WTC11 (cell line): ENCODE measurements at regions of chr4 and their contacts with region 1.

Region 1: GRCh38 chr4:78056265-78057129 is 626 bp upstream of the FRAS1 start:
- DNase-seq: peak; percentile 80
- ATAC-seq: peak; percentile 59
- H3K4me3 Mint-ChIP-seq: peak overlapping the region; percentile 93
- H3K27ac Mint-ChIP-seq: peak overlapping the region; percentile 100
- H3K4me1 Mint-ChIP-seq: peaks cover 32% of the 10 kb centered on the region
- H3K27me3 Mint-ChIP-seq: no peaks in the 10 kb centered on the region; the same call in 1 of the 2 replicates
- CTCF ChIP-seq: no peak

Region 2: GRCh38 chr4:78069859-78070258 is 13.4 kb after region 1 on chr4:
- CTCF ChIA-PET with region 1: interaction called, 21 read pairs
- POLR2A ChIA-PET with region 1: interaction called, 6 read pairs
- DNase-seq: no peak
- ATAC-seq: no peak
- H3K4me3 Mint-ChIP-seq: no peak overlapping the region
- H3K27ac Mint-ChIP-seq: no peak overlapping the region
- H3K4me1 Mint-ChIP-seq: peaks cover 54% of the 10 kb centered on the region
- H3K27me3 Mint-ChIP-seq: no peaks in the 10 kb centered on the region
- CTCF ChIP-seq: no peak

Region 3: DNA sequence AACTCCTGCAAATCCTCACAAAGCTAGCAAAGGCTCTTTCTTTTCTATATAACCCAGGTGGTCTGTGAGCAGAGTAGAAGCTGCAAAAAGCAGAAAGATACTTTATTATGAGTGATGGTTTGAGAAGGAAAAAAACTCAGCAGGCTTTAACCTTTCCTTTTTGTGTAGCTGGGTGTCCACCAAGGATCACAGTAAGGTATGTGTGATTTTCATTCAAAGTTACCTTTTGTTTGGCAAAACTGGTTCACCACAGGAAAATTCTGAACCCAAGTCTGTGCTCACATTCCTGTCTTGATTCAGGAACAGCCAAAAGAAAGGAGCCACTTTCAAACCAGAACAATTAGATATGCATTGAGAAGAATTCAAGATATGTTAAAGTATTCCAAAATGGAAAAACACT is 36.4 kb after region 1 on chr4:
- CTCF ChIA-PET with region 1: interaction called, 35 read pairs
- POLR2A ChIA-PET with region 1: interaction called, 6 read pairs
- DNase-seq: no peak
- ATAC-seq: peak; percentile 90
- H3K4me3 Mint-ChIP-seq: peak overlapping the region; percentile 53
- H3K27ac Mint-ChIP-seq: peak overlapping the region; percentile 100
- H3K4me1 Mint-ChIP-seq: peaks cover 44% of the 10 kb centered on the region
- H3K27me3 Mint-ChIP-seq: no peaks in the 10 kb centered on the region
- CTCF ChIP-seq: no peak

Region 4: GRCh38 chr4:78171482-78171881 is 115.0 kb after region 1 on chr4:
- CTCF ChIA-PET with region 1: interaction called, 60 read pairs
- POLR2A ChIA-PET with region 1: interaction called, 12 read pairs
- DNase-seq: peak; percentile 49
- ATAC-seq: peak; percentile 74
- H3K4me3 Mint-ChIP-seq: no peak overlapping the region
- H3K27ac Mint-ChIP-seq: peak overlapping the region; percentile 17; the same call in 1 of the 2 replicates
- H3K4me1 Mint-ChIP-seq: peaks cover 79% of the 10 kb centered on the region
- H3K27me3 Mint-ChIP-seq: no peaks in the 10 kb centered on the region
- CTCF ChIP-seq: no peak

Region 5: DNA sequence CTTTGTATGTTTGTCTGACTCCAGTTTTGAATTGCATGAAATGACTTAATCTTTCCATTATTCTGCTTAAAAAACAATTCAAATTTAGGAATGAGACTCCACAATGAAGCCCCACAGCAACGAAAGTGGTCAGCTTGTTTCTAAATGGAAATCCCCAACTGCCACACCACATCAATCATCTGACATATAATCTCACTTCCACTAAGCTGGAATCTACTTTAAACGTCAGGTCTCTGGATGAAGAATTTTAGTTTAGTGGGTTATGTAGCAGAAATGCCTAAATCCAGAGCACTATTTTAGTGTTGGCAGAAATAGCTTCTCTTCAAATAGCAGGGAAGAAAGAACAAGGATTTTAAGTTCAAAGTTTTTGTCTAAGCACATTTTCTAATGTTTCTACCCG is 717.9 kb after region 1 on chr4:
- CTCF ChIA-PET with region 1: no interaction called
- POLR2A ChIA-PET with region 1: interaction called, 10 read pairs
- DNase-seq: no peak
- ATAC-seq: no peak
- H3K4me3 Mint-ChIP-seq: no peak overlapping the region
- H3K27ac Mint-ChIP-seq: no peak overlapping the region; the same call in 1 of the 2 replicates
- H3K4me1 Mint-ChIP-seq: peaks cover 10% of the 10 kb centered on the region; the same call in 1 of the 2 replicates
- H3K27me3 Mint-ChIP-seq: no peaks in the 10 kb centered on the region
- CTCF ChIP-seq: no peak